ENCODE measurements at regions of chr16 and their contacts with region 1.

Region 1: GRCh38 chr16:88569985-88570690 is at the start of gene ZC3H18:
- DNase-seq: peak; percentile 99
- ATAC-seq: peak; percentile 93
- H3K4me3 Mint-ChIP-seq: peak within 1 kb of the TSS; percentile 89
- H3K27ac Mint-ChIP-seq: peak within 1 kb of the TSS; percentile 87
- H3K4me1 Mint-ChIP-seq: peaks cover 24% of the 10 kb centered on the region
- H3K27me3 Mint-ChIP-seq: no peaks in the 10 kb centered on the region
- total RNA-seq, gene ZC3H18: 83.4 to 88.7 TPM

Region 2: GRCh38 chr16:88455610-88456355 is 114.4 kb before region 1 on chr16:
- POLR2A ChIA-PET with region 1: interaction called, 12 read pairs
- DNase-seq: peak; percentile 72
- ATAC-seq: peak; percentile 19
- H3K4me3 Mint-ChIP-seq: peak overlapping the region; percentile 78
- H3K27ac Mint-ChIP-seq: peak overlapping the region; percentile 79
- H3K4me1 Mint-ChIP-seq: peaks cover 16% of the 10 kb centered on the region
- H3K27me3 Mint-ChIP-seq: peaks cover 3% of the 10 kb centered on the region

Region 3: DNA sequence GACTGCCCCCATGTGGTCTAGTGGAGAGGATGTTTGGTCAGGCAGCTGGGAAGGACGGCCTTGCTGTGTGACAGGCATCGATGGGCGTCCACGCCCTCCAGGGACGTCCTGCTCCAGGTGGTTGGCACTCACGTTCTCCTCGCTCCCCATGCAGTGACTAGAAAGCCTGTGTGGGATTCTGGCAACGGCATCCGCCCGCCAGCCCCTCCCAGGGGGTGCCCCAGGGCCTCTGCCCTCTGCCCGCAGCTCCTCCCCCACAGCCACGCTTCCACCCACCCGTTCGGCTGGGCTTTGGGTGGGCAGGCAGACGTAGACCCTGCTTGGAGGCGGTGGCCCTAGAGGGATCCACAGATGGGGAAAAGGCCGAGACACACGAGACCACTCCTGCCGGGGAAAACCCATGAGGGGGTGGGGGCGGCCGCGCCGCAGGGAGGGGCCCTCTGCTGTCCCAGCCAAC is 63.6 kb after region 1 on chr16:
- POLR2A ChIA-PET with region 1: interaction called, 10 read pairs
- DNase-seq: peak; percentile 68
- ATAC-seq: peak; percentile 35
- H3K4me3 Mint-ChIP-seq: peak overlapping the region; percentile 80
- H3K27ac Mint-ChIP-seq: peak overlapping the region; percentile 77
- H3K4me1 Mint-ChIP-seq: peaks cover 23% of the 10 kb centered on the region
- H3K27me3 Mint-ChIP-seq: peaks cover 16% of the 10 kb centered on the region

Region 4: GRCh38 chr16:88693420-88694177 is 123.5 kb after region 1 on chr16:
- POLR2A ChIA-PET with region 1: no interaction called
- DNase-seq: no peak
- ATAC-seq: no peak
- H3K4me3 Mint-ChIP-seq: no peak overlapping the region
- H3K27ac Mint-ChIP-seq: peak overlapping the region; percentile 90
- H3K4me1 Mint-ChIP-seq: peaks cover 37% of the 10 kb centered on the region
- H3K27me3 Mint-ChIP-seq: no peaks in the 10 kb centered on the region

Measured in activated naive CD8-positive, alpha-beta T cell treated with anti-CD3 and anti-CD28 coated beads, Interleukin-2, amount 10 ng/mL, durations not matched to agents 7 days and 5 days (primary cell).